Aorta (tissue), 5 donors: ENCODE measurements at regions of chr12 and their contacts with region 1.

Region 1: GRCh38 chr12:43882578-43883178 is 46.8 kb downstream of the TMEM117 start:
- DNase-seq: no peak
- ATAC-seq: peak; percentile 76
- H3K4me3 ChIP-seq: no peak overlapping the region
- H3K27ac ChIP-seq: no peak overlapping the region
- H3K4me1 ChIP-seq: peaks cover 0 to 2% of the 10 kb centered on the region in 2 donors
- H3K27me3 ChIP-seq: no peaks in the 10 kb centered on the region

Region 2: DNA sequence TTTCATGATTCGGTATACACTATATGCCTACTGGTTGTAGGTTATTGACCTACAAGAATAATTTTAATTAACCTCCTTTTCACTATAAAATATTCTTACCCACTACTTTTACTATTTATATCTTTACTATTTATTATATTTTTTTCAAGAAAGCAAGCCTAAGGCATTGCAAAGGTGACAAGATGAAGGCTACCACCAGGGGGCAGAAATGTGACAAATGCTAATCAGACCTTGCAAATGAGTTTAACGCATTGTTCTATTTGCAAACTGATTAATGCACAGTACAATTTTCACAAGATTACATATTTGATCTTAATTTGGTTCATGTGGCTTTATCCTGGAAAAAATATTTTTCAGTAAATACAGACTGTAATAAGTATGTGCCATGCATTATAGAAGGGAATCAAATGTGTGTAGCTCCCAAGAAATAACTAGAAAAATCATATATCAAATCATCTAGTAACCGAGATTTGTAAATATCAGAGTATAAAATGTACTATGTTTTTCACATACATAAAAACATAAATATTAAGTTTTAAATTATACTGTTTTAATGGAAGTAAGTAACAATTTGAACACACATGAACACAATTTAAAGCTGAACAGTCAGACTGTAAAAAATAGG is 437.6 kb before region 1 on chr12:
- intact Hi-C with region 1: loop called in 1 of 2 experiments (anchors 10 kb)
- DNase-seq: peak in 1 of 2 donors; percentile 40
- ATAC-seq: no peak
- H3K4me3 ChIP-seq: no peak overlapping the region
- H3K27ac ChIP-seq: no peak overlapping the region
- H3K4me1 ChIP-seq: no peaks in the 10 kb centered on the region
- H3K27me3 ChIP-seq: no peaks in the 10 kb centered on the region

Region 3: GRCh38 chr12:43776498-43776897 is 106.2 kb before region 1 on chr12:
- intact Hi-C with region 1: loop called in 1 of 2 experiments (anchors 10 kb)
- DNase-seq: no peak
- ATAC-seq: no peak
- H3K4me3 ChIP-seq: no peak overlapping the region
- H3K27ac ChIP-seq: no peak overlapping the region
- H3K4me1 ChIP-seq: no peaks in the 10 kb centered on the region
- H3K27me3 ChIP-seq: no peaks in the 10 kb centered on the region

Region 4: DNA sequence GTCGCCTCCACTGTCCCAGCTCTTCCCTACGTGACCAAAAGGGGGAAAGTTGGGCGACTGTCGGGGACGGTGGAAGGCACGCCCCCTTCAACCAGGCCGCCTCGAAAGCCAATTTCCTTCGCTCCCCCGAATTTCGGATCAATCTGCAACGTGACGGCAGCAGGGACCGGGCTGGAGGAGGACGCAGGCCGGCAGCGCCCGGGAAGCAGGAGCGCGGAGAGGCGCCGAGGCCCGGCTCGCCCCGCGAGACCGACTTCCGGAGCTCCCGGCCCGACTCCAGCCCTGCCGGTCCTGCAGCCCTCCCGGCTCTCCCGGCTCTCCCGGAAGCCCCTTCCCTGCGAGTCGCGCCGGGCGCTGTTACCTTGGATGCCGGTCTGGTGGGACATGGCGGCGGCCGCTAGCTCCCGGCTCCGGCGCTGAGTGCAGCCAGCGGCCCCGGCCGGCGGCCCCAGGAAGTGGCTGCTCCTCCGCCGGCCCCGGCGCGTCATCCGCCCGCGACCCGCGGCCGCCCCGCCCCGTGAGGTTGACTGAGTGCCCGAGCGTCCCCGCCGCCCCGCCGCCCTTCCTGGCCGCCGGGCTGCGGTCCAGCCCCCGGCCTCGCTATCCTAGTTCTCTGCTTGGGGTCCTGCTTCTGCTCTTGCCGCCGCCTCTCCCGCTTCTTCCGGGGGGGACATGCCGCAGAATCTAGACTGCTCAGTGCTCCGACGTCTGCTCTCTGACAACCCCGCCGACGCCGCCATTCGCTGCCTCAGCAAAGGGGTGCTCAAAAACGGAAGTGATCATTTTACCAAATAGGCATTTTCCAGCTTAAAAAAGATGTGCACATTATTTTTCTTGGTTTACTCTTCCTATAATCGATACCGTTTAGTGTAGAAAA is 76.6 kb before region 1 on chr12 and contains the start of gene TWF1:
- intact Hi-C with region 1: loop called in 1 of 2 experiments (anchors 10 kb)
- DNase-seq: peak; percentile 92 to 97
- ATAC-seq: peak; percentile 99
- H3K4me3 ChIP-seq: peak within 1 kb of the TSS; percentile 84 to 89
- H3K27ac ChIP-seq: peak within 1 kb of the TSS; percentile 69 to 91
- H3K4me1 ChIP-seq: no peaks in the 10 kb centered on the region
- H3K27me3 ChIP-seq: no peaks in the 10 kb centered on the region
- total RNA-seq, gene TWF1: 52.5 to 53.7 TPM